ENCODE measurements at regions of chr19 and their contacts with region 1.

Region 1: DNA sequence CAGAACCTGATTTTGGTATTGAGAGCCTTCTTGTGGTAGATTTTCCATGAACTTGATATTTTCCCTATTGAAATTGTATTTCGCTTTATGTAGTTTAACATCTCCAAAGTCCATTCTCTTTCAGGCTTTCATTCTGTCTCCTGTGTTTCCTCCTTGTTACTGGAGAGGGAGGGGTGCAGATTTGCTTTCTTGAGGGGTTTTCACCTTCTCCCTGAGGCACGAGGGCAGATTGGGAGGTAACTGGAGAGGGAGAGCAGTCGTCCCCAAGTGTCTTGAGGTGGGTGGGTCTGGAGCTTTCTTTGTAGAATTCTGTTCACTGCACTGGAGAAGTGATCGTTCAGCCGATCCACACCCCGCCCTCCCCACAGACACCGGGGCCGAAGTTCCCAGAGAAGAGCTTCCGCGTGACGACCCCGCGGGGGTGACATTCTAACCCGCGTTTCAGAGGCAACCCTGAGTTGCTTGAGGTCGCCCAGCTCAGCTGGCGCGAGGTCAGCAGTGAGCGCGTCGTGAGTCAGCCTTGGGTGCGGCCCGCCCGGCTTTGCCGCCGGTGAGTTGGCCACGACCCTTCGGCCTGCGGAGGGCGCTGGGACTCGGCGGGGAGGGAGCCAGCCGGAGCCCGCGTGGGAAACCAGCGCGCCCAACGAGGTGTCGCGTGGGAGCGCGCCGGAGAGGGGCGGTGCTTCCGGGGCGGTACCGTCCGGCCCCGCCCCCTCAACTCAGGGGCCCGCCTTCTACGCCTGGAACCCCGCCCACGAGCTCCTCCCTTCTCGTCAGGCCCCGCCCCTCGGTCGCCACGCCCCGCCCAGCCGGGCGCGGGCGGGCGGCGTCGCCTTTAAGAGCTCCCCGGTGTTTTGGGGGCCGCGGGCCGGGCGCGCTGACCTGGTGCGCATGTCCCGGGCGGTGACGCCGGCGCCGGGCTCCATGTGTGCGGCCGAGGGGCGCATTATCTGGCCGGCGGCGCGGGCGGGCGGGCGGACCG is at the start of gene GATAD2A:
- DNase-seq: peak; percentile 89
- H3K4me3 Mint-ChIP-seq: peak within 1 kb of the TSS; percentile 98
- H3K27ac Mint-ChIP-seq: peak within 1 kb of the TSS; percentile 88
- H3K4me1 Mint-ChIP-seq: peaks cover 62% of the 10 kb centered on the region
- H3K27me3 Mint-ChIP-seq: no peaks in the 10 kb centered on the region

Region 2: GRCh38 chr19:19280561-19280960 is 124.6 kb before region 1 on chr19:
- CTCF ChIA-PET with region 1: no interaction called
- DNase-seq: no peak
- H3K4me3 Mint-ChIP-seq: no peak overlapping the region
- H3K27ac Mint-ChIP-seq: no peak overlapping the region
- H3K4me1 Mint-ChIP-seq: no peaks in the 10 kb centered on the region
- H3K27me3 Mint-ChIP-seq: no peaks in the 10 kb centered on the region

Region 3: GRCh38 chr19:19361075-19361594 is 44.0 kb before region 1 on chr19:
- CTCF ChIA-PET with region 1: interaction called, 13 read pairs
- DNase-seq: peak; percentile 84
- H3K4me3 Mint-ChIP-seq: no peak overlapping the region
- H3K27ac Mint-ChIP-seq: peak overlapping the region; percentile 81
- H3K4me1 Mint-ChIP-seq: peaks cover 42% of the 10 kb centered on the region
- H3K27me3 Mint-ChIP-seq: no peaks in the 10 kb centered on the region

Region 4: DNA sequence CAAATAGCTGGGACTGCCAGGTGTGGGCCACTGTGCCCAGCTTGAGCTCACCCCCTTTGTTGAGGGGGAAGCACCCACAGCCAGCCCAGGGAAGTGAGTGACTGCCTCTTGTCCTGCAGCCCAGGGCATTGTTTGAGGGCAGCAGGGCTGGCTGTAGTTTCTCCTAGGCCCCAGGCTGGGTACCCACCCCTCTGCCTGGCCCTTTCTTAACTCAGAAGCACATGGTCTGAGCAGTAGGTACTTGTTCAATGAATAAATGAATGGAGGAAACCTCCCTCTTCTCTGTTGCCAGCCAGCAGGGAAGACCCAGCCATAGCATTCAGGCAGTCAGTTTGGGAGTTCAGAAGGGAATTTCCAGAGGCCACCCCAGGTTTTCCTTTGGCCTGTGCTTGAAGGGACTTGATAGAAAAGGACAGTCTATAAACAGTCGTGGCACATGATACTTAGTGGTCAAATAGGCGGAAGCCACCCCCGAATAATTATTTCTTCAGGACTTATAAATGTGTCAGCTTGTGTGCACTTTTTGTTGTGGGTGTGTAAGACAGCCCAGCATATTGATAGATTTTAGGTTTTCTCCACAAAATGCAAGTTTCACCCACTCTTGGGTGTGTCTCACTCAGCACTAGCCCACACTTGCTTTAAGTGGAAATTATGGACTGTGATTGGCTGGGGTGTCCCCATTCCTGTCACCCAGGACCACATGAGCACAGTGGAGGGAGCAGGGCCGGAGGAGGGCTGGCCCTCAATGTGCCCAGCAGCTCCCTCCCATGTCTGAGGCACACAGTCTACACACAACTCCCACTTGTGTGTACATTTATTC is 33.4 kb after region 1 on chr19:
- CTCF ChIA-PET with region 1: no interaction called
- DNase-seq: no peak
- H3K4me3 Mint-ChIP-seq: no peak overlapping the region
- H3K27ac Mint-ChIP-seq: peak overlapping the region; percentile 37
- H3K4me1 Mint-ChIP-seq: peaks cover 20% of the 10 kb centered on the region
- H3K27me3 Mint-ChIP-seq: no peaks in the 10 kb centered on the region

Region 5: GRCh38 chr19:19451429-19452242 is 46.5 kb after region 1 on chr19:
- CTCF ChIA-PET with region 1: no interaction called
- DNase-seq: no peak
- H3K4me3 Mint-ChIP-seq: no peak overlapping the region
- H3K27ac Mint-ChIP-seq: peak overlapping the region; percentile 79
- H3K4me1 Mint-ChIP-seq: peaks cover 72% of the 10 kb centered on the region
- H3K27me3 Mint-ChIP-seq: no peaks in the 10 kb centered on the region